PC-3 (cell line): ENCODE measurements at regions of chr12 and their contacts with region 1.

Region 1: GRCh38 chr12:110937104-110937641 is 16.8 kb upstream of the MYL2 start:
- DNase-seq: peak; percentile 79
- ATAC-seq: peak; percentile 53
- H3K4me3 ChIP-seq: peak overlapping the region; percentile 23; the same call in 1 of the 2 replicates
- H3K27ac ChIP-seq: no peak overlapping the region
- H3K4me1 ChIP-seq: peaks cover 15% of the 10 kb centered on the region
- H3K27me3 ChIP-seq: no peaks in the 10 kb centered on the region
- CTCF ChIP-seq: peak; percentile 98

Region 2: DNA sequence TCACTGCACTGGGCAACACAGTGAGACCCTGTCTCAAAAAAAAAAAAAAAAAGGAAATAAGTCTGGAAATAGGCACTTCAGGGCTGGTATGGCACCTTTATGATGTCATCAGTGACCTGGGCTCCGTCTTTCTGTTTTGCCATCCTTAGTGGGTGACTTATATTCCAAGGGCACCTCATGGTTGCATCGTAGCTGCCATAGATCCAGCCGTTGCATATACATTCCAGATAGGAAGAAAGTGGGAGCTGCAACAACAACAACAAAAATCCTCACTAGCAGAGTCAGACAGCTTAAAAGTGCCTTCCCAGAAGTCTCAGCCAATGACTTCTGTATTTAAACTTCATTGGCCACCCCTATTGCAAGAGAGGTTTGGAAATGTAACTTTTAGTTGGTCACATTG is 43.2 kb before region 1 on chr12:
- CTCF ChIA-PET with region 1: interaction called, 4 read pairs
- POLR2A ChIA-PET with region 1: no interaction called
- intact Hi-C with region 1: loop called (anchors 1 kb)
- DNase-seq: no peak
- ATAC-seq: no peak
- H3K4me3 ChIP-seq: peak overlapping the region; percentile 53; the same call in 1 of the 2 replicates
- H3K27ac ChIP-seq: no peak overlapping the region
- H3K4me1 ChIP-seq: peaks cover 25% of the 10 kb centered on the region; the same call in 1 of the 2 replicates
- H3K27me3 ChIP-seq: no peaks in the 10 kb centered on the region
- CTCF ChIP-seq: no peak

Region 3: GRCh38 chr12:110983806-110984205 is 46.6 kb after region 1 on chr12:
- CTCF ChIA-PET with region 1: no interaction called
- POLR2A ChIA-PET with region 1: no interaction called
- intact Hi-C with region 1: no loop called
- DNase-seq: no peak
- ATAC-seq: no peak
- H3K4me3 ChIP-seq: no peak overlapping the region
- H3K27ac ChIP-seq: no peak overlapping the region
- H3K4me1 ChIP-seq: no peaks in the 10 kb centered on the region
- H3K27me3 ChIP-seq: peaks cover 89% of the 10 kb centered on the region
- CTCF ChIP-seq: no peak

Region 4: GRCh38 chr12:111066744-111067437 is 129.7 kb after region 1 on chr12:
- CTCF ChIA-PET with region 1: no interaction called
- POLR2A ChIA-PET with region 1: no interaction called
- intact Hi-C with region 1: no loop called
- DNase-seq: peak; percentile 45
- ATAC-seq: no peak
- H3K4me3 ChIP-seq: no peak overlapping the region
- H3K27ac ChIP-seq: peak overlapping the region; percentile 18
- H3K4me1 ChIP-seq: peaks cover 33% of the 10 kb centered on the region
- H3K27me3 ChIP-seq: no peaks in the 10 kb centered on the region
- CTCF ChIP-seq: no peak

Region 5: DNA sequence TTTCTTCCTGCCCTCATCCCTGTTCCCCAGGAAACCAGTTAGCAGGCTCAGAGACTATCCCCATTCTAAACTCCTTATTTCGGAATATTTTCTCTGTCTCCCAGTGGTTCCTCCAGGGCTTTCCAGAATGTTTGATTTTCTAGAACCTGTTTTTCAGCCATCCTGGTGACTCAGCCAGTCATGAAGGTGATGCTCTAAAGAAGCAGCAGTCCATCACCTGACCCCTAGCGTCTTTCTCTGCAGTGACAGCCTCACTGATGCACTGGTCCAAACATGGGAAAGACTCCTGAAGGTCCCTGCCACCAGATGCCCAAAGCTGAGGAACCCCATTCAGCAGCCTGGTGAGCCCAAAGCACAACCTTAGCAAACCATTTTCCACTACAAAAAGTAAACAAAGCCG is 219.1 kb after region 1 on chr12:
- CTCF ChIA-PET with region 1: no interaction called
- POLR2A ChIA-PET with region 1: no interaction called
- intact Hi-C with region 1: loop called (anchors 5 kb)
- DNase-seq: peak; percentile 94
- ATAC-seq: peak; percentile 94
- H3K4me3 ChIP-seq: no peak overlapping the region
- H3K27ac ChIP-seq: no peak overlapping the region
- H3K4me1 ChIP-seq: peaks cover 4% of the 10 kb centered on the region; the same call in 1 of the 2 replicates
- H3K27me3 ChIP-seq: peaks cover 63% of the 10 kb centered on the region
- CTCF ChIP-seq: peak; percentile 75

Region 6: GRCh38 chr12:111174251-111174960 is 237.2 kb after region 1 on chr12:
- CTCF ChIA-PET with region 1: no interaction called
- POLR2A ChIA-PET with region 1: no interaction called
- intact Hi-C with region 1: loop called (anchors 5 kb)
- DNase-seq: peak; percentile 62
- ATAC-seq: peak; percentile 57
- H3K4me3 ChIP-seq: no peak overlapping the region
- H3K27ac ChIP-seq: no peak overlapping the region
- H3K4me1 ChIP-seq: peaks cover 8% of the 10 kb centered on the region
- H3K27me3 ChIP-seq: peaks cover 40% of the 10 kb centered on the region
- CTCF ChIP-seq: peak; percentile 59

Region 7: GRCh38 chr12:111298582-111299436 is 361.6 kb after region 1 on chr12:
- CTCF ChIA-PET with region 1: no interaction called
- POLR2A ChIA-PET with region 1: no interaction called
- intact Hi-C with region 1: loop called (anchors 1 kb)
- DNase-seq: peak; percentile 76
- ATAC-seq: peak; percentile 92
- H3K4me3 ChIP-seq: no peak overlapping the region
- H3K27ac ChIP-seq: no peak overlapping the region
- H3K4me1 ChIP-seq: no peaks in the 10 kb centered on the region
- H3K27me3 ChIP-seq: peaks cover 4% of the 10 kb centered on the region; the same call in 1 of the 2 replicates
- CTCF ChIP-seq: peak; percentile 96

Region 8: GRCh38 chr12:111313833-111314259 is 376.7 kb after region 1 on chr12:
- CTCF ChIA-PET with region 1: interaction called, 5 read pairs
- POLR2A ChIA-PET with region 1: no interaction called
- intact Hi-C with region 1: loop called (anchors 5 kb)
- DNase-seq: peak; percentile 87
- ATAC-seq: peak; percentile 70
- H3K4me3 ChIP-seq: 0 out of 2 replicates have a peak overlapping the region, but pooled peaks have one; percentile 18
- H3K27ac ChIP-seq: no peak overlapping the region
- H3K4me1 ChIP-seq: peaks cover 28% of the 10 kb centered on the region
- H3K27me3 ChIP-seq: no peaks in the 10 kb centered on the region
- CTCF ChIP-seq: peak; percentile 98

Region 9: DNA sequence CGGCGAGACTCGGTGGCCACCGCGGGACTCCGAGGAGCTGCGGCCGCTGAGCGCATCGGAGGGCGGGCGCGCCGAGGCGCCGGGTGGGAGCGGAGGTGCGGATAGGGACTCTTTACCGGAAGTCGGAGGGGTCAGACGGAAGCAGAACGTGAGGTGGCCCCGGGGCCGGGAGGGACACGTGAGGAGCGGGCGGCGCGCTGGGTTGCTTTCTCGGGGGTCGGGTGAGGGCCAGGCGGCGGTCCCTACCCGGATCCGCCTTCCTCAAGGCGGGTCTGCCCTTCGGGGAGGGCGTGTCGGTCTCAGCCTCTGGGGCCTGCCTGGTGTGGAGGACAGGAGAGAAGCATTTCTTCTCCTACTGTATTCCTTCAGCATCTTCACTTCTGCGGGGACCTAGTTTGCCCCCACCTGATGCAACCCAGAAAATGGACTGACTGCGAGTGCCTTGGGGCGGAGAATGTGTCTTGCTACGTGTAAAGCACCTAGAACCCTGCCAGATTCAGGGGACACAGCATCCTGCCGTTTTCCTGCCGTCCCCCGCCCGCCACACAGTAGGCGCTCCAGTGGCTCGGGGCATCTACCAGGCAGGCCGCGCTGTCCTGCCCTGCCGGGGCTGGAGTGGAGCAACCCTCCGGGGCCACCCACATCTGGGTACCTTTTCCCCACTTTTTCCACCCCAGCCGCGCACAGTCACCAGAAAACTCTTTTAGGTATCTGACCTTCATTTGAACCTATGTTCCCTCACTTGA is 662.5 kb after region 1 on chr12:
- CTCF ChIA-PET with region 1: no interaction called
- POLR2A ChIA-PET with region 1: interaction called, 12 read pairs
- intact Hi-C with region 1: no loop called
- DNase-seq: peak; percentile 81
- ATAC-seq: peak; percentile 57
- H3K4me3 ChIP-seq: peak overlapping the region; percentile 87
- H3K27ac ChIP-seq: peak overlapping the region; percentile 77
- H3K4me1 ChIP-seq: peaks cover 28% of the 10 kb centered on the region
- H3K27me3 ChIP-seq: no peaks in the 10 kb centered on the region
- CTCF ChIP-seq: no peak